GM12878 (cell line): ENCODE measurements at regions of chr5 and their contacts with region 1.

Region 1: DNA sequence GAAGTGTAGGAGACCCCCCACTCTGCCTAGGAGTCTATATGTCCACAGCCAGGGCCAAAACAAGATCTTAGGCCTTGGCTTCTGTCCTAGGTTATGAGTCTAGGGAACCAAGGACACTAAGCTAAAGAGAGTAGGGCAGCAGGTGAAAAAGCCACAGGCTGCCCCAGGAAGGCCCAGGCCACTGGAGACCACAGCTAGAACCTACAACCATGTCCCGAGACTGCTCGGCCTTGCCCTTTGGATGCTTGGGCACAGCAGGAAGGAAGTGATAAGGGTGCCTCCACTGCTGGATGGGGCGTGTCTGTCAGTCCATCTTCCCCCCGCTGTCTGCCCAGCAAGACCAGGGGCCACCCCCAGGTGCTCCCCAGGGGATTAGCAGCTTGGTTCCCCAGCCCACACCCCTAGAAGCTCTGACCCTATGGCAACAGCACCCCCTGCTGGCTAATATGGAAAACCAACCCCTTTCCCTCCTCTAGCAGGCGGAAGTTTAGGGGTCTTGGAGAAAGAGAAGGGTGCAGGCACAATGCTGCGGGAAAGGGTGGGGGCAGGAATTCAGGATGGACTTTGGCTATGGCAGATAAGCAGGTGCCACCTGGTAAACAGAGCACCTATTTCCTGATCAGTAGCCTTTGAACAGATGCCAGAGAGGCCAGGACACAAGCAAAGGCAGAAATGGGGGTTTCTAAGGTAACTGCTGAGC is 10.5 kb upstream of the IRF1 start:
- DNase-seq: no peak
- ATAC-seq: peak; percentile 55
- H3K4me3 ChIP-seq: no peak overlapping the region
- H3K27ac ChIP-seq: peak overlapping the region; percentile 42; the same call in 1 of the 2 replicates
- H3K4me1 ChIP-seq: peaks cover 34% of the 10 kb centered on the region
- H3K27me3 ChIP-seq: no peaks in the 10 kb centered on the region
- CTCF ChIP-seq: peak; percentile 80 to 94 (median 85); a peak in 5 of 6 replicates
- EP300 ChIP-seq: 0 out of 4 replicates have a peak, but pooled peaks of 1 of the 2 experiments have one; percentile 11
- POLR2A ChIP-seq: no peak
- RAD21 ChIP-seq: peak; percentile 100

Region 2: DNA sequence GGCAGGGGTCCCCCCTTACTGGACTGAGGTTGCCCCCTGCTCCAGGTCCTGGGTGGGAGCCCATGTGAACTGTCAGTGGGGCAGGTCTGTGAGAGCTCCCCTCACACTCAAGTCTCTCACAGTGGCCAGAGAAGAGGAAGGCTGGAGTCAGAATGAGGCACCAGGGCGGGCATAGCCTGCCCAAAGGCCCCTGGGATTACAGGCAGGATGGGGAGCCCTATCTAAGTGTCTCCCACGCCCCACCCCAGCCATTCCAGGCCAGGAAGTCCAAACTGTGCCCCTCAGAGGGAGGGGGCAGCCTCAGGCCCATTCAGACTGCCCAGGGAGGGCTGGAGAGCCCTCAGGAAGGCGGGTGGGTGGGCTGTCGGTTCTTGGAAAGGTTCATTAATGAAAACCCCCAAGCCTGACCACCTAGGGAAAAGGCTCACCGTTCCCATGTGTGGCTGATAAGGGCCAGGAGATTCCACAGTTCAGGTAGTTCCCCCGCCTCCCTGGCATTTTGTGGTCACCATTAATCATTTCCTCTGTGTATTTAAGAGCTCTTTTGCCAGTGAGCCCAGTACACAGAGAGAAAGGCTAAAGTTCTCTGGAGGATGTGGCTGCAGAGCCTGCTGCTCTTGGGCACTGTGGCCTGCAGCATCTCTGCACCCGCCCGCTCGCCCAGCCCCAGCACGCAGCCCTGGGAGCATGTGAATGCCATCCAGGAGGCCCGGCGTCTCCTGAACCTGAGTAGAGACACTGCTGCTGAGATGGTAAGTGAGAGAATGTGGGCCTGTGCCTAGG is 427.7 kb before region 1 on chr5 and contains the start of gene CSF2:
- CTCF ChIA-PET with region 1: no interaction called
- POLR2A ChIA-PET with region 1: interaction called, 7 read pairs
- RAD21 ChIA-PET with region 1: no interaction called
- SMC1A ChIA-PET with region 1: no interaction called
- in situ Hi-C with region 1: loop called (anchors 10 kb)
- intact Hi-C with region 1: no loop called
- DNase-seq: no peak
- ATAC-seq: peak; percentile 35
- H3K4me3 ChIP-seq: no peak within 1 kb of the TSS
- H3K27ac ChIP-seq: no peak within 1 kb of the TSS
- H3K4me1 ChIP-seq: no peaks in the 10 kb centered on the region
- H3K27me3 ChIP-seq: no peaks in the 10 kb centered on the region
- CTCF ChIP-seq: no peak
- EP300 ChIP-seq: no peak
- POLR2A ChIP-seq: no peak
- RAD21 ChIP-seq: no peak
- polyA plus RNA-seq, gene CSF2: 0.39 to 0.57 TPM

Region 3: GRCh38 chr5:132334812-132335211 is 166.3 kb before region 1 on chr5:
- CTCF ChIA-PET with region 1: no interaction called
- POLR2A ChIA-PET with region 1: no interaction called
- RAD21 ChIA-PET with region 1: no interaction called
- SMC1A ChIA-PET with region 1: no interaction called
- in situ Hi-C with region 1: no loop called
- intact Hi-C with region 1: no loop called
- DNase-seq: no peak
- ATAC-seq: peak; percentile 78
- H3K4me3 ChIP-seq: no peak overlapping the region
- H3K27ac ChIP-seq: no peak overlapping the region
- H3K4me1 ChIP-seq: no peaks in the 10 kb centered on the region
- H3K27me3 ChIP-seq: no peaks in the 10 kb centered on the region
- CTCF ChIP-seq: no peak
- EP300 ChIP-seq: no peak
- POLR2A ChIP-seq: no peak
- RAD21 ChIP-seq: no peak

Region 4: GRCh38 chr5:132394667-132395259 is 106.3 kb before region 1 on chr5:
- CTCF ChIA-PET with region 1: interaction called, 481 read pairs
- POLR2A ChIA-PET with region 1: interaction called, 6 read pairs
- RAD21 ChIA-PET with region 1: interaction called, 15 read pairs
- SMC1A ChIA-PET with region 1: interaction called, 340 read pairs
- in situ Hi-C with region 1: loop called (anchors 10 kb)
- intact Hi-C with region 1: no loop called
- DNase-seq: no peak
- ATAC-seq: peak; percentile 95
- H3K4me3 ChIP-seq: no peak overlapping the region
- H3K27ac ChIP-seq: no peak overlapping the region
- H3K4me1 ChIP-seq: peaks cover 9% of the 10 kb centered on the region
- H3K27me3 ChIP-seq: no peaks in the 10 kb centered on the region
- CTCF ChIP-seq: no peak
- EP300 ChIP-seq: no peak
- POLR2A ChIP-seq: no peak
- RAD21 ChIP-seq: no peak

Region 5: GRCh38 chr5:132419502-132420468 is 81.3 kb before region 1 on chr5:
- CTCF ChIA-PET with region 1: interaction called, 184 read pairs
- POLR2A ChIA-PET with region 1: interaction called, 389 read pairs
- RAD21 ChIA-PET with region 1: interaction called, 453 read pairs
- SMC1A ChIA-PET with region 1: interaction called, 162 read pairs
- in situ Hi-C with region 1: no loop called
- intact Hi-C with region 1: loop called (anchors 1 kb)
- DNase-seq: no peak
- ATAC-seq: peak; percentile 50
- H3K4me3 ChIP-seq: peak overlapping the region; percentile 31; the same call in 1 of the 2 replicates
- H3K27ac ChIP-seq: peak overlapping the region; percentile 94
- H3K4me1 ChIP-seq: peaks cover 79% of the 10 kb centered on the region
- H3K27me3 ChIP-seq: no peaks in the 10 kb centered on the region
- CTCF ChIP-seq: peak; percentile 74 to 81 (median 80)
- EP300 ChIP-seq: no peak
- POLR2A ChIP-seq: no peak
- RAD21 ChIP-seq: peak; percentile 78

Region 6: DNA sequence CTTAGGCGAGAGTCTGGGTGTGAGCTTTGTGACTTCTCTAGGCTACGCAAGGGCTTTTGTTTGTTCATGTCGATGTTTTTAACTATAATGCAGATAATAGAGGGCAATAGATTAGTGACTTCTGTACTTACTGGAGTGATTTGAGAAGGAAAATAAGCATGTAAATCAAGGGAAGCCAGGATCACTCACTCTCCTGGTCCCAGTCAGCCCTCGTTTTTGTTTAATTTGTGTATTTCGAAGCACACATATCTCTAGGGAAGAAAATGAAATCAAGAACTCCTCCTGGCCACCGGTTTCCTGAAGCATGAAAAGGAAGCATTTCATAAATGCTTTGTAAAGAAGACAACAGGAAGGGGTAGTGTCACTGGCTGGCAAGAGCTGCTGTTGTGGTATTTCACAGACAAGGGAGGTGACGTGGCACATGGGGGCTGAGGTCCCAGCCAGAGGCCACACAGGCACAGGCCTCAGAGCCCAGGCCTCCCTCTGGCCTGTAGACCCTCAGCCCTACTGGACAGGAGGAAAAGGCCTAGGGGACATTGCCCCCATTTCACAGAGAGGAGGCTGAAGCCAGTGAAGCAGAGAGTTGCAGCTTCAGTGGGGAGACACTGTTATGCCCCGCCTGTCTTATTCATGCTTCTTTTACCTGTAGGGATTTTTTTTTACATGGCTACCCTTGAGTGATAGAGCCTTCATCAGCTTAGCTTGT is 44.6 kb before region 1 on chr5:
- CTCF ChIA-PET with region 1: interaction called, 9 read pairs
- POLR2A ChIA-PET with region 1: interaction called, 26 read pairs
- RAD21 ChIA-PET with region 1: interaction called, 89 read pairs
- SMC1A ChIA-PET with region 1: interaction called, 17 read pairs
- in situ Hi-C with region 1: no loop called
- intact Hi-C with region 1: loop called (anchors 5 kb)
- DNase-seq: peak; percentile 73
- ATAC-seq: peak; percentile 78
- H3K4me3 ChIP-seq: peak overlapping the region; percentile 2; the same call in 1 of the 2 replicates
- H3K27ac ChIP-seq: peak overlapping the region; percentile 89
- H3K4me1 ChIP-seq: peaks cover 63% of the 10 kb centered on the region
- H3K27me3 ChIP-seq: no peaks in the 10 kb centered on the region
- CTCF ChIP-seq: no peak
- EP300 ChIP-seq: peak in 1 of 2 experiments; percentile 23; a peak in 1 of 4 replicates
- POLR2A ChIP-seq: no peak
- RAD21 ChIP-seq: no peak

Region 7: DNA sequence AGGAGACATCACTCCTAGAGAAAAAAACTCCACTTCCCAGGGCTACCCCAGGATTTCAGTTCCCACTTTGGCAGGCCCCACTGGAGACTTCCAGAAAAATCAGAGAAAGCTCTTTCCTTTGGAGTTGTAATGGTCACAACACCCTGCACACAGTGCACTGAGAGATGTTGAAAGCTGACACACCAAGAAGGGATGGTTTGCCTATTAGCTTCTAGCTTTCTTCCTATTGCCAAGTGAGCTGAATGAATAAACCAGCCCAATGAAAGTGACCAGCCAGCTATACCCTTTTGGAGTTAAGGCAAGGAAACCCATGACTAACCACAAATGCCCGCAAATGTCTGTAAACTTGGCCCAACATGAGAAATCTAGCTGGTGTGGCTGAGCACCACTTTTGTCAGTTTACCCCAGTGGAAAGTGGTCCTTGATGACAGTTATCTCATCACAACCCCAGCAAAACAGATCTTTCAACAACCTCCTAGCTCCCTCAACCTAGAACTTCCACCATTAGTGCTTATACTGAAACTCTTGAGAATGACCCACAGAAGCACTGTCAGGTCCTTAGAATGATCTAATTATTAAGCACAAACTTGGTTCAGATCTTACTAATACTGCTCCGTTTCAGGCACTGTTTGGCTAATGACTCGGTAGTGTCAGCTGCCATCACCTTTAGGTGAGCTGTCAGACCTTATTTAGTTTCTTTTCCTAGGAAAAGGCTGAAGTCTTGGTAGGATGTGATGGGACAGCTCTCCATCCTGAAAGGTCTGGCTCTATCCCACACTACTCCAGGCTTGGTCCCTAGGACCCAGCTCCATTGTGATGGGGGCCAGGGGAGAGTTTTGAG is 21.8 kb before region 1 on chr5:
- CTCF ChIA-PET with region 1: interaction called, 17 read pairs
- POLR2A ChIA-PET with region 1: interaction called, 5 read pairs
- RAD21 ChIA-PET with region 1: interaction called, 20 read pairs
- SMC1A ChIA-PET with region 1: interaction called, 13 read pairs
- in situ Hi-C with region 1: no loop called
- intact Hi-C with region 1: no loop called
- DNase-seq: no peak
- ATAC-seq: peak; percentile 53
- H3K4me3 ChIP-seq: no peak overlapping the region
- H3K27ac ChIP-seq: peak overlapping the region; percentile 20
- H3K4me1 ChIP-seq: peaks cover 29% of the 10 kb centered on the region
- H3K27me3 ChIP-seq: no peaks in the 10 kb centered on the region
- CTCF ChIP-seq: no peak
- EP300 ChIP-seq: no peak
- POLR2A ChIP-seq: no peak; the same call in 1 of the 2 replicates
- RAD21 ChIP-seq: no peak

Region 8: DNA sequence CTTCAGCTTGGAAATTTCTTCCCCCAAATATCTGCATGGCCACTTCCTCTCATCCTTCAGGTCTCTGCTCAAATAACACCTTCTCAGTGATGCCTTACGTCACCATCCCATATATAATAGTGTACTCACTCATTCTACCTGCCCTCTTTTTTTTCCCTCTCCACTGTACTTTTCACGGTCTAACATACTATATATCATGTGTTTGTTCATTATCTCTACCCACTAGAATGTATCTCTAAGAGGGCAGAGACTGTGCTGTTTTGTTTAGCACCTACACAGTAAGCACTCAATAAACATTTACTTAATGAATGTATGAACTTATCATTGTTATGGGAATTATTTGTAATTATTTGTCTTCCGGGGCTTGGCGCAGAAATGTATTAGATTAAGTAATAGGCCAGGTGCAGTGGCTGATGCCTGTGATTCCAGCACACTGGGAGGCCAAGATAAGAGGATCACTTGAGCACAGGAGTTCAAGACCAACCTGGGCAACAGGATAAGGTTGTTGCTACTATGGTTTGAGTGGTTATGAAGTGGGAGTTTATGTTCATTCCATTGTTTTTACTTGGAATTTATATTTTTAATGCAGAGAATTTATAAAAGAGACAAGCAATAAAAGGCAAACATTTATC is 150.9 kb after region 1 on chr5:
- CTCF ChIA-PET with region 1: no interaction called
- POLR2A ChIA-PET with region 1: no interaction called
- RAD21 ChIA-PET with region 1: no interaction called
- SMC1A ChIA-PET with region 1: no interaction called
- in situ Hi-C with region 1: no loop called
- intact Hi-C with region 1: no loop called
- DNase-seq: no peak
- ATAC-seq: no peak
- H3K4me3 ChIP-seq: no peak overlapping the region
- H3K27ac ChIP-seq: no peak overlapping the region
- H3K4me1 ChIP-seq: peaks cover 12% of the 10 kb centered on the region
- H3K27me3 ChIP-seq: no peaks in the 10 kb centered on the region
- CTCF ChIP-seq: no peak
- EP300 ChIP-seq: no peak
- POLR2A ChIP-seq: no peak
- RAD21 ChIP-seq: no peak

Region 9: GRCh38 chr5:132791026-132791425 is 289.9 kb after region 1 on chr5:
- CTCF ChIA-PET with region 1: no interaction called
- POLR2A ChIA-PET with region 1: no interaction called
- RAD21 ChIA-PET with region 1: no interaction called
- SMC1A ChIA-PET with region 1: no interaction called
- in situ Hi-C with region 1: no loop called
- intact Hi-C with region 1: no loop called
- DNase-seq: no peak
- ATAC-seq: no peak
- H3K4me3 ChIP-seq: no peak overlapping the region
- H3K27ac ChIP-seq: no peak overlapping the region
- H3K4me1 ChIP-seq: no peaks in the 10 kb centered on the region
- H3K27me3 ChIP-seq: no peaks in the 10 kb centered on the region
- CTCF ChIP-seq: no peak
- EP300 ChIP-seq: no peak
- POLR2A ChIP-seq: no peak
- RAD21 ChIP-seq: no peak